Activated T-helper 1 cell treated with anti-CD3 and anti-CD28 coated beads, Interleukin-12 subunit alpha, Interleukin-12 subunit beta, Interleukin-2, Interleukin-4 antibody, amounts not matched to agents 30 ng/mL and 10 ng/mL and 1 ng/mL, durations not matched to agents 14 hours and 24 hours and 36 hours (primary cell): ENCODE measurements at regions of chr3 and their contacts with region 1.

Region 1: GRCh38 chr3:140863580-140864009 is 78.0 kb upstream of the SLC25A36 start:
- DNase-seq: peak; percentile 8
- H3K4me3 Mint-ChIP-seq: no peak overlapping the region
- H3K27ac Mint-ChIP-seq: no peak overlapping the region
- H3K4me1 Mint-ChIP-seq: no peaks in the 10 kb centered on the region
- H3K27me3 Mint-ChIP-seq: peaks cover 4% of the 10 kb centered on the region

Region 2: GRCh38 chr3:139935016-139935865 is 928.4 kb before region 1 on chr3 and contains the start of gene CLSTN2:
- intact Hi-C with region 1: loop called (anchors 10 kb)
- DNase-seq: no peak
- H3K4me3 Mint-ChIP-seq: no peak within 1 kb of the TSS
- H3K27ac Mint-ChIP-seq: no peak within 1 kb of the TSS
- H3K4me1 Mint-ChIP-seq: no peaks in the 10 kb centered on the region
- H3K27me3 Mint-ChIP-seq: peaks cover 45% of the 10 kb centered on the region
- total RNA-seq, gene CLSTN2: not detected in 2 replicates

Region 3: GRCh38 chr3:140552898-140553297 is 310.7 kb before region 1 on chr3:
- intact Hi-C with region 1: loop called (anchors 10 kb)
- DNase-seq: no peak
- H3K4me3 Mint-ChIP-seq: no peak overlapping the region
- H3K27ac Mint-ChIP-seq: no peak overlapping the region
- H3K4me1 Mint-ChIP-seq: no peaks in the 10 kb centered on the region
- H3K27me3 Mint-ChIP-seq: peaks cover 3% of the 10 kb centered on the region

Region 4: GRCh38 chr3:140832883-140833282 is 30.7 kb before region 1 on chr3:
- intact Hi-C with region 1: no loop called
- DNase-seq: no peak
- H3K4me3 Mint-ChIP-seq: no peak overlapping the region
- H3K27ac Mint-ChIP-seq: no peak overlapping the region
- H3K4me1 Mint-ChIP-seq: peaks cover 7% of the 10 kb centered on the region
- H3K27me3 Mint-ChIP-seq: peaks cover 4% of the 10 kb centered on the region